AG04450 (cell line): ENCODE measurements at regions of chr4 and their contacts with region 1.

Region 1: GRCh38 chr4:89024051-89024675 is 32.8 kb downstream of the FAM13A start:
- DNase-seq: peak; percentile 44
- H3K4me3 ChIP-seq: no peak overlapping the region
- H3K27ac ChIP-seq: no peak overlapping the region
- H3K27me3 ChIP-seq: no peaks in the 10 kb centered on the region
- CTCF ChIP-seq: peak; percentile 80

Region 2: GRCh38 chr4:88523325-88524129 is 500.6 kb before region 1 on chr4 and contains the start of gene PYURF:
- CTCF ChIA-PET with region 1: interaction called, 42 read pairs
- POLR2A ChIA-PET with region 1: no interaction called
- DNase-seq: peak; percentile 73
- H3K4me3 ChIP-seq: peak within 1 kb of the TSS; percentile 92
- H3K27ac ChIP-seq: peak within 1 kb of the TSS; percentile 66
- H3K27me3 ChIP-seq: no peaks in the 10 kb centered on the region
- CTCF ChIP-seq: no peak
- polyA plus RNA-seq, gene PYURF: 50.5 and 65.7 TPM in 2 replicates

Region 3: DNA sequence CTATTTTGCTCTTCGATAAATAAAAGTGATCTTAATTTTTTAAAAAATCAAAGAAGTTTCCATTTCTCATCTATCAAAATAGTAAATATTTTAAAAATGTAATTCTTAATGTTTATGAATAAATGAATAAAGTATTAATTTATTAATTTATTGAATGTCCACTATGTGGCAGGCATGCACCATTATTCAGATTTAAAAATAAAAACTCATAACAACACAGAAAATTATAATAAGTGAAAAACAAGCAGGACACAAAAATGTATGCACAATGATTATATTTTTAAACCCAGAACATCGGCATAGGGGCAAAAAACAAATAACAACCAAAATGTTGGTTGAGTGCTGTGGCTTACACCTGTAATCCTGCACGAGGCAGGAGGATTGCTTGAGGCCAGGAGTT is 495.3 kb before region 1 on chr4:
- CTCF ChIA-PET with region 1: interaction called, 42 read pairs
- POLR2A ChIA-PET with region 1: no interaction called
- DNase-seq: no peak
- H3K4me3 ChIP-seq: no peak overlapping the region
- H3K27ac ChIP-seq: no peak overlapping the region
- H3K27me3 ChIP-seq: no peaks in the 10 kb centered on the region
- CTCF ChIP-seq: peak; percentile 21; the same call in 1 of the 2 replicates

Region 4: DNA sequence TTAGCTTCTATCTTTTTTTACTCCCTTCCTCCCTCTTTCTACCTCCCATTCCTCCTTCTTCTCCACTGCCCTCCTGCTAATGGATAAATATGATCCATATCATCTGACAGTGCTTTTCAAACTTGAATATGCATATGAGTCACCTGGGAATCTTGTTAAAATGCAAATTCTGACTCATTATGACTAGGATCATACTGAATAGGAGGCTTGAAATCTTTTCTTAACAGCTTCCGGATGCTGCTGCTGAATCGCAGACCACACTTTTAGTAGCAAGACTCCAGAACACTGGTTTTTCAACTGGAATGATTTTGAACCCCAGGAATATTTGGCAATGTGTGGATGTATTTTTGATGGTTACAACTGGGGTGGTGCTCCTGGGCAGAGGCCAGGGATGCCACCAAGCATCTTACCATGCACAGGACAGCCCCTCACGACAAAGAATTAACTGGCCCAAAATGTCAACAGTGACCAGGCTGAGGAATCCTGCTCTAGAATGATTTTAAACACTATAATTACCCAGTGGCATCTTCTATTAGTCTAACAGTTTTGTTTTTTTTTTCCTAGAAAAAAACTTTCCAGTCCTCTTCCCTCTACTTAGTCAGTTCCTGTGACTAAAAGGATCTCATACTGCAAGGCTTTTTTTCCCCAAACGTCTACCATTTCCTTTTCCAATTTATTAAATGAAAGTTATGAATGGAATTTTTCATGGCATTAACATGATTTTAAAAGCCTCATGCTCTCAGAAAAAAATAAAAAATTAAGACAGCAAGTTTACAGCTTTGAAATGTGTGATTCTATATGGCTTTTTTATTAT is 490.0 kb before region 1 on chr4:
- CTCF ChIA-PET with region 1: interaction called, 42 read pairs
- POLR2A ChIA-PET with region 1: no interaction called
- DNase-seq: peak; percentile 52
- H3K4me3 ChIP-seq: peak overlapping the region; percentile 35
- H3K27ac ChIP-seq: peak overlapping the region; percentile 92
- H3K27me3 ChIP-seq: no peaks in the 10 kb centered on the region
- CTCF ChIP-seq: no peak

Region 5: GRCh38 chr4:88672987-88673386 is 351.2 kb before region 1 on chr4:
- CTCF ChIA-PET with region 1: interaction called, 18 read pairs
- POLR2A ChIA-PET with region 1: no interaction called
- DNase-seq: no peak
- H3K4me3 ChIP-seq: no peak overlapping the region
- H3K27ac ChIP-seq: no peak overlapping the region
- H3K27me3 ChIP-seq: no peaks in the 10 kb centered on the region
- CTCF ChIP-seq: peak; percentile 76

Region 6: DNA sequence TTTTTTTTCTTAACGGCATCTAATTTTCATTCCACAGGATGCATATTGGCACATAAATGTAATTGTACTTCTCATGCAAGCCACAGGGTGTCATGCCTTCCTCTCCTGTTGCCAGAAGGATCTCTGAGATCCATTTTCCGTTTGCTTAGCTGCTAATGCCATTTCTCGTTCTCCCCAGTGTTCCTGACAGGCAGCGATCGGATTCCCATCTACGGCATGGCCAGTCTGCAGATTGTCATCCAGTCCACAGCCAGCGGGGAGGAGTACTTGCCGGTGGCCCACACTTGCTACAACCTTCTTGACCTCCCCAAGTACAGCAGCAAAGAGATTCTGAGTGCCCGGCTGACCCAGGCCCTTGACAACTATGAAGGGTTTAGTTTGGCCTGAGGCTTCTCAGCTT is 317.6 kb before region 1 on chr4:
- CTCF ChIA-PET with region 1: interaction called, 101 read pairs
- POLR2A ChIA-PET with region 1: no interaction called
- DNase-seq: peak; percentile 43
- H3K4me3 ChIP-seq: no peak overlapping the region
- H3K27ac ChIP-seq: no peak overlapping the region
- H3K27me3 ChIP-seq: no peaks in the 10 kb centered on the region
- CTCF ChIP-seq: peak; percentile 73

Region 7: GRCh38 chr4:88818631-88819470 is 205.3 kb before region 1 on chr4:
- CTCF ChIA-PET with region 1: interaction called, 163 read pairs
- POLR2A ChIA-PET with region 1: interaction called, 3 read pairs
- DNase-seq: peak; percentile 20
- H3K4me3 ChIP-seq: no peak overlapping the region
- H3K27ac ChIP-seq: no peak overlapping the region
- H3K27me3 ChIP-seq: no peaks in the 10 kb centered on the region
- CTCF ChIP-seq: peak; percentile 60